Right ventricle myocardium inferior (tissue), 1 donor: ENCODE measurements at regions of chr7 and their contacts with region 1.

Region 1: DNA sequence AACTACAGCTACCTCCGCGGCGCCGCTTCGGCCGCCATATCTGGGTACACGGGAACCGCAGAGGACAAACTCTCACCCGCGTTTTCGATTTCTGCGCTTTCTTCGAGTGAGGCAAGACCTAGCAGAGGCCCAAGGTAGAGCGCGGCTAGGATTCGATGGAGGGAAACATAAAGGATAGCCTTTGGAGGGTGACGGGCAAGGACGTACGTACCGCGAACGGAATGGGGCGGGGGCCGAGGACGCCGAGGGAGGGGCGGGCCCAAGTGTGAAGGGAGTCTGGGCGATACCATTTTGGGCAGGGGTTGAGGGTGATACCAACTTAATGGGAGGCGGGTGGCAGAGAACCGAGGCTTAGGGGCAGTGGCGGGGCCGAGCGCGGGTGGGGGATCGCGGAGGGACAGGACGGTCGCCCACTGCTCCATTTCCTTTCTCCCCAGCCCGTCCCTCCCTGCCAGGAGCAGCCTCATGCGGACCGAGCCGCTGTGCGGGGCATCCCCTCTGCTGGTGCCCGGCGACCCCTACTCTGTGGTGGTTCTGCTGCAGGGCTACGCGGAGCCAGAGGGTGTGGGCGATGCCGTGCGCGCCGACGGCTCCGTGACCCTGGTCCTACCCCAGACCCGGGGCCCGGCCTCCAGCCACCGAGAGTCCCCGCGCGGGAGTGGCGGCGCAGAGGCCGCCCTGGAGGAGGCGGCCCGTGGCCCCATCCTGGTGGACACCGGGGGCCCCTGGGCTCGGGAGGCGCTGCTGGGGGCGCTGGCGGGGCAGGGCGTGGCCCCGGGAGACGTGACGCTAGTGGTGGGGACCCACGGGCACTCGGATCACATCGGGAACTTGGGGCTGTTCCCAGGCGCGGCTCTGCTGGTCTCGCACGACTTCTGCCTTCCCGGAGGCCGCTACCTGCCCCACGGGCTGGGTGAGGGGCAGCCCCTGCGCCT is at the start of gene MBLAC1:
- DNase-seq: peak; percentile 92
- ATAC-seq: peak; percentile 95
- total RNA-seq, gene MBLAC1: 2.1 TPM

Region 2: DNA sequence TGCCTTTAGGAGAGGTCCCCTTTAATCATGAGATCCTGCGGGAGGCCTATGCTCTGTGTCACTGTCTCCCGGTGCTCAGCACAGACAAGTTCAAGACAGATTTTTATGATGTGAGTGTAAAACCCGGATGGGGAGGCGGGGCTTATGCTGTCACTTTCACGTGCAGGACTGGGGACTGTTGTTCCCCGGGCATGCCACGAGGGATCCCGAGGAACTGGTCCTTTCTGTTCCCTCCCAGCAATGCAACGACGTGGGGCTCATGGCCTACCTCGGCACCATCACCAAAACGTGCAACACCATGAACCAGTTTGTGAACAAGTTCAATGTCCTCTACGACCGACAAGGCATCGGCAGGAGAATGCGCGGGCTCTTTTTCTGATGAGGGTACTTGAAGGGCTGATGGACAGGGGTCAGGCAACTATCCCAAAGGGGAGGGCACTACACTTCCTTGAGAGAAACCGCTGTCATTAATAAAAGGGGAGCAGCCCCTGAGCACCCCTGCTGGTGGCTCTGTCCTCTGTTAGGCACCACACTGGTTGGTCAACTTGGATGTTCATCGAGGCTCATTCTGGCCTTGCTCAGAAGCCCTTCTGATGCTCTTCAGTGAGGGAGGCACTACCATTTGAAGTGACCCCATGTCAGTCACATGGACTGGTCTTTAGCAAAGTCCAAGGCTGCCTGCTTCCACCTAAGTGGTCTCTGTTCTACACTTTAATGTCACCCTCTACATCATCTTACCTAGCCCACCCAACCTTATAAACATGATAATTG is 35.6 kb before region 1 on chr7:
- intact Hi-C with region 1: loop called (anchors 5 kb)
- DNase-seq: no peak
- ATAC-seq: no peak

Region 3: DNA sequence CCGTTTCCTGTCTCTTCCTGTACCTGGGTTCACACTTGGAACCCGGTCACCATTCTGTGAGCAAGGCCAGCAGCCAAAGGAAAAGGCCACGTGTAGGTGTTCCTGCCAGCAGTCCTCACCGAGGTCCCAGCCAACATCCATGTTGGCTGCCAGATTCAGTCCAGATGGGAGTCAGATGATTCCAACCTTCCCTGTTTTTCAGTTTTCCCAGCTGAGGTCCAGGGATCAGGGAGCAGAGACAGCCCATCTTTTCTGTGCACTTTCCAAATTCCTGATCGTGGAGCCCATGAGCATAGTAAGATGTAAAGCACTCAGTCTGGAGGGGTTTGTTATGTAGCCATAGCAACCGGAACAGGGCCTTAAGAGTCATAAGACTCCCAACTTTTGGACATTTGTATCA is 88.7 kb after region 1 on chr7:
- intact Hi-C with region 1: loop called (anchors 5 kb)
- DNase-seq: no peak
- ATAC-seq: peak; percentile 68